Thyroid gland (tissue), 4 donors: ENCODE measurements at regions of chr14 and their contacts with region 1.

Region 1: GRCh38 chr14:50619556-50620141 is 48.5 kb downstream of the SAV1 start:
- DNase-seq: no peak
- H3K4me3 ChIP-seq: no peak overlapping the region
- H3K27ac ChIP-seq: no peak overlapping the region
- H3K4me1 ChIP-seq: peaks cover 0 to 7% of the 10 kb centered on the region in 2 donors
- H3K27me3 ChIP-seq: no peaks in the 10 kb centered on the region
- CTCF ChIP-seq: peak; percentile 42 to 81 (median 64)
- POLR2A ChIP-seq: no peak

Region 2: DNA sequence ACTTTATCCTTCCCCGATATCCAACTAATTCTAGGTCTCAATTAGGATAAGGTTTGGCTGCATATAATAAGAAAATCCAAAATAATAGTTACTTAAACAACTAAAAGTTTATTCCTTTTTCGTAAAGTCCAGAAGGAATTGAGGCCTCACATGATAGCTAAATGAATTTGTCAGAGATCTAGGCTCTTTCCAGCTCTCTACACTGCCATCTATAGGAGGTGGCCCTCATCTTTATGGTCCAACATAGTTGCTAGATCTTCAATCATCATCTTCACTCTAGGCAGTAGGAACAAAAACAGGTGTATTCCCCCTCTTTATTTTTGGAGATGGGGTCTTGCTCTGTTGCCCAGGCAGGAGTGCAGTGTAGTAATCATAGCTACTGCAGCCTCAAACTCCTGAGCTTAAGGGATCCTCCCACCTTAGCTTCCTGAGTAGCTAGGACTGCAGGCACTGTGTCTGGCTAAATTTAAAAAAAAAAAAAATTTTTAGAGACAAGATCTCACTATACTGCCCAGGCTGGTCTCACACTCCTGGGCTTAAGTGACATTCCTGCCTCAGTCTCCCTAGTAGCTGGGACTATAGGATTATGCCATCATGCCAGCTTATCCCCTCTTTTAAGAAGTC is 94.9 kb after region 1 on chr14:
- intact Hi-C with region 1: loop called (anchors 10 kb)
- DNase-seq: peak in 1 of 2 donors; percentile 21
- H3K4me3 ChIP-seq: no peak overlapping the region
- H3K27ac ChIP-seq: no peak overlapping the region
- H3K4me1 ChIP-seq: no peaks in the 10 kb centered on the region
- H3K27me3 ChIP-seq: no peaks in the 10 kb centered on the region
- CTCF ChIP-seq: peak in 5 of 6 experiments; percentile 46 to 54 (median 52)
- POLR2A ChIP-seq: no peak

Region 3: DNA sequence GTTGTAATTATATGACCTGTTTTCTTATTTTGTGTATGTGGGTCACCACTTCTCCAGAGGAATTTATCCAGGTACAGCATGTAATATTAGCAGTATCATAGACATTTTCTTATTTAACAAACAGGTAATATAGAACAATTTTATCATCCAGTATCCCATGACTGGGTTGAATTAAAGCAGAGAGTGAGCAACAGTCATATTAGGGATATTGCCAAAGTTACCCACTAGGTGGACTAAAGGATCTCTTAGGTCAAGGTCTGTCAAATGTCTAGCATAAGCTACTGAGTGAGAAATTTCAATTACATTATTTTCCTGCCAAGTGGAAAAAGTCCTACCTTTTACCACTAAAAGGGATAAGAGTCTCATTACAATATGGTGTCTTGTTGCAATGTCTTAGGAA is 537.4 kb after region 1 on chr14:
- intact Hi-C with region 1: no loop called
- DNase-seq: no peak
- H3K4me3 ChIP-seq: no peak overlapping the region
- H3K27ac ChIP-seq: no peak overlapping the region
- H3K4me1 ChIP-seq: peaks cover 4 to 7% of the 10 kb centered on the region in 2 donors
- H3K27me3 ChIP-seq: no peaks in the 10 kb centered on the region
- CTCF ChIP-seq: peak in 3 of 6 experiments; percentile 40 to 44 (median 41)
- POLR2A ChIP-seq: no peak